Esophagus muscularis mucosa (tissue), 4 donors: ENCODE measurements at regions of chr5 and their contacts with region 1.

Region 1: DNA sequence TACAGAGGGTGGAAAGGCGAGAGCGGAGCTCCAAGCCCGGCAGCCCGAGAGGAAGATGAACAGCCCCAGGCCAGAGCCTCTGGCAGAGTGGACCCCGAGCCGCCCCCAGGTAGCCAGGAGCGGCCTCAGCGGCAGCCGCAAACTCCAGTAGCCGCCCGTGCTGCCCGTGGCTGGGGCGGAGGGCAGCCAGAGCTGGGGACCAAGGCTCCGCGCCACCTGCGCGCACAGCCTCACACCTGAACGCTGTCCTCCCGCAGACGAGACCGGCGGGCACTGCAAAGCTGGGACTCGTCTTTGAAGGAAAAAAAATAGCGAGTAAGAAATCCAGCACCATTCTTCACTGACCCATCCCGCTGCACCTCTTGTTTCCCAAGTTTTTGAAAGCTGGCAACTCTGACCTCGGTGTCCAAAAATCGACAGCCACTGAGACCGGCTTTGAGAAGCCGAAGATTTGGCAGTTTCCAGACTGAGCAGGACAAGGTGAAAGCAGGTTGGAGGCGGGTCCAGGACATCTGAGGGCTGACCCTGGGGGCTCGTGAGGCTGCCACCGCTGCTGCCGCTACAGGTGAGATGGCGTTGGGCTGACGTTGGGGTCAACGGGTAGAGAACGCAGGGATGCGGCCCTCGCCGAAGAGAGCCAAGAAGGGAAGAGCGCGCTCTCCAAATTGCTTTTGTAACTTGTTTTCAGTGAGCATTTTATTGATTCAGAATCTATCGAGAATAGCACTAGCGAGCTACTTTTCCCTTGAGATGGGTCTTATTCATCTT is at the start of gene PTGER4:
- DNase-seq: no peak
- H3K4me3 ChIP-seq: peak within 1 kb of the TSS; percentile 58 to 82 (median 64)
- H3K27ac ChIP-seq: peak within 1 kb of the TSS; percentile 82 to 86 (median 86)
- H3K4me1 ChIP-seq: peaks cover 7 to 79% (median 61%) of the 10 kb centered on the region in 4 donors
- H3K27me3 ChIP-seq: peaks cover 0 to 33% (median 0%) of the 10 kb centered on the region in 4 donors
- CTCF ChIP-seq: no peak
- EP300 ChIP-seq: no peak
- POLR2A ChIP-seq: peak; percentile 52
- total RNA-seq, gene PTGER4: 13.3 to 44.6 (median 27.9) TPM

Region 2: DNA sequence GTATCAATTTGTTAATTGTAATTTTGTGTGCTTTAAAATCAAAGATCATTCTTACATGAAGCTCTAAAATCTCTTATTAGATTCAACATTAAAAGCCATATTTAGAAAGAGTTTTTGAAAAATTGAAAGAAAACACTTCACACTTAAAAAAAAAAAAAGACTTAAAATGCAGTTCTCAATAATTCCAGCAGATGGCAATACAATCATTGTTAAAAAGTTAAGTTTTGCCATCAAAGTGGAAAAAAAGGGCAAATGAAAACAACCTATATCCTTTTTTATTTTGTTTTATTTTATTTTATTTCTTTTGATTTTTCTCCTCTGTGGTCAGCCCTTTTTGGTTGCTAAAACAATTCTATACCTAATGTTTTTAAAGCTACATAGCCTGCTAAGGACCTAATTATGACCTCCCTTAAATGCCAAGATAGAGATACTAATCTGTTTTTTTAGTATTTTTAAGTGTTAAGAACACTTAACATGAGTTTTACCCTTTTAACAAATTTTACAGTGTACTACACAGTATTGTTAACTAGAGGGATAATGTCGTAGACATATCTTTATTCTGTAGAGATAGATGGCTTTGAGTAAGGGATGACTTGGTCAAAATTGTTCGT is 1101.1 kb before region 1 on chr5:
- intact Hi-C with region 1: loop called (anchors 5 kb)
- DNase-seq: no peak
- H3K4me3 ChIP-seq: no peak overlapping the region
- H3K27ac ChIP-seq: no peak overlapping the region
- H3K4me1 ChIP-seq: no peaks in the 10 kb centered on the region
- H3K27me3 ChIP-seq: peaks cover 0 to 4% (median 0%) of the 10 kb centered on the region in 4 donors
- CTCF ChIP-seq: peak; percentile 36 to 77 (median 71)
- EP300 ChIP-seq: no peak
- POLR2A ChIP-seq: no peak

Region 3: DNA sequence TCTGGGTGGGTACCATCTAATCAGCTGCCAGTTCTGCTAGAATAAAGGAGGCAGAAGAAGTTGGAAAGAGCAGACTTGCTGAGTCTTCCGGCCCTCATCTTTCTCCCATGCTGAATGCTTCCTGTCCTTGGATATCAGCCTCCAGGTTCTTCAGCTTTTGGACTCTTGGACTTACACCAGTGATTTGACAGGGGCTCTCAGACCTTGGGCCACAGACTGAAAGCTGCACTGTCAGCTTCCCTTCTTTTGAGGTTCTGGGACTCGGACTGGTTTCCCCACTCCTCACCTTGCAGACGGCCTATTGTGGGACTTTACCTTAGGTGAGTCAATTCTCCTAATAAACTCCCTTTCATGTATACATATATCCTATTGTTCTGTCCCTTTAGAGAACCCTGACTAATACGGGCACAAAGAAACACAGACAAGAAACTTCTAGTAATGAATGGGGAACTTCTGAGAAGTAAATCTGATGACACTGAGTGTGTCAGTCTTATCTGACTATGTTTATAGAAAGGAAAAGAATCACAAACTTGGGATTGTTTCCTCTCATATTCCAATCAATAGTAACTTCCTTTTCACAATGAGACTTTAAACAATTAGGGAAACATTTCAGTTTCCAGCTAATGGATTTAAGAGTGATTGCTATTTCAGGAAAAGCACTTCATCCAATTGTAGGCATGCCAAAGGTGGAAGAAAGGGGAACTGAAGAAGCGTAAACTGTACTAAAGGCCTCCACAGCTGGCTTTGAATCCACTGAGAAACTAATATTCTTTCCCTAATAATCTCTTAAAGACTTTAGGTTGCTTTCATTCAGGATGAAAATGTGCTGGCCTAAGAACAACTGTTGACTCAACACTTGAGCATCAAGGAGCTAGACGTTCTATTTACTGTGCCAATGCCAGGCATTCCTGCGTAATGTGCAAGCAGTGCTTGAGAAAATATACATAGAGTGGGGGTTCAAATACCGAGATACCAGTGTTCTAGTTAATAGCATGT is 128.3 kb before region 1 on chr5:
- intact Hi-C with region 1: loop called (anchors 5 kb)
- DNase-seq: no peak
- H3K4me3 ChIP-seq: no peak overlapping the region
- H3K27ac ChIP-seq: peak overlapping the region; percentile 24 to 49 (median 42)
- H3K4me1 ChIP-seq: peaks cover 0 to 17% (median 15%) of the 10 kb centered on the region in 4 donors
- H3K27me3 ChIP-seq: no peaks in the 10 kb centered on the region
- CTCF ChIP-seq: no peak
- EP300 ChIP-seq: no peak
- POLR2A ChIP-seq: no peak

Region 4: DNA sequence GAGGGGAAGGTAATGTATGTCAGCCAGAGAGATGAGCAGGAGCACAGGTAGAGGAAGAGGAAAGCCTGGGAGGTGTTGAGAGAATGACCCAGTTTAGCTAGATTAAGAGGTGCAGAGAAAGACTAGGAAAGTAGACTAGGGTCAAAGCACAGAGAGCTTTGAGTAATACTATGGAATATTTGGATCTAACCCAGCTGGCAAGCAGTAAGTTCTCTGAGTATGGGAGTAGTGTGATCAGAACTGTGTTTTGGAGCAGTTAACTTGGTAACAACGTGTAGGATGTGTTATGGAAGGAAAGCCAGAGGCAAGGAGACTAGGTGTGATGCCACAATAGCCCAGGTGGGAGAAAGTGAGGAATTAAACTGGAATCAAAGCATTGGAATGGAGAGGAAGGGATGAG is 85.3 kb before region 1 on chr5:
- intact Hi-C with region 1: no loop called
- DNase-seq: no peak
- H3K4me3 ChIP-seq: no peak overlapping the region
- H3K27ac ChIP-seq: no peak overlapping the region
- H3K4me1 ChIP-seq: peaks cover 0 to 5% (median 0%) of the 10 kb centered on the region in 4 donors
- H3K27me3 ChIP-seq: no peaks in the 10 kb centered on the region
- CTCF ChIP-seq: no peak
- EP300 ChIP-seq: no peak
- POLR2A ChIP-seq: no peak